Calu3 (cell line): ENCODE measurements at regions of chr13 and their contacts with region 1.

Region 1: GRCh38 chr13:26698392-26699196 is 62.0 kb downstream of the GPR12 start:
- DNase-seq: peak; percentile 81
- H3K4me3 Mint-ChIP-seq: no peak overlapping the region
- H3K27ac Mint-ChIP-seq: no peak overlapping the region
- H3K4me1 Mint-ChIP-seq: peaks cover 8% of the 10 kb centered on the region
- H3K27me3 Mint-ChIP-seq: no peaks in the 10 kb centered on the region
- CTCF ChIP-seq: peak; percentile 54

Region 2: GRCh38 chr13:26186118-26186870 is 512.3 kb before region 1 on chr13:
- CTCF ChIA-PET with region 1: interaction called, 41 read pairs
- intact Hi-C with region 1: loop called (anchors 1 kb)
- DNase-seq: peak; percentile 87
- H3K4me3 Mint-ChIP-seq: peak overlapping the region; percentile 84
- H3K27ac Mint-ChIP-seq: peak overlapping the region; percentile 81
- H3K4me1 Mint-ChIP-seq: no peaks in the 10 kb centered on the region
- H3K27me3 Mint-ChIP-seq: no peaks in the 10 kb centered on the region
- CTCF ChIP-seq: no peak

Region 3: DNA sequence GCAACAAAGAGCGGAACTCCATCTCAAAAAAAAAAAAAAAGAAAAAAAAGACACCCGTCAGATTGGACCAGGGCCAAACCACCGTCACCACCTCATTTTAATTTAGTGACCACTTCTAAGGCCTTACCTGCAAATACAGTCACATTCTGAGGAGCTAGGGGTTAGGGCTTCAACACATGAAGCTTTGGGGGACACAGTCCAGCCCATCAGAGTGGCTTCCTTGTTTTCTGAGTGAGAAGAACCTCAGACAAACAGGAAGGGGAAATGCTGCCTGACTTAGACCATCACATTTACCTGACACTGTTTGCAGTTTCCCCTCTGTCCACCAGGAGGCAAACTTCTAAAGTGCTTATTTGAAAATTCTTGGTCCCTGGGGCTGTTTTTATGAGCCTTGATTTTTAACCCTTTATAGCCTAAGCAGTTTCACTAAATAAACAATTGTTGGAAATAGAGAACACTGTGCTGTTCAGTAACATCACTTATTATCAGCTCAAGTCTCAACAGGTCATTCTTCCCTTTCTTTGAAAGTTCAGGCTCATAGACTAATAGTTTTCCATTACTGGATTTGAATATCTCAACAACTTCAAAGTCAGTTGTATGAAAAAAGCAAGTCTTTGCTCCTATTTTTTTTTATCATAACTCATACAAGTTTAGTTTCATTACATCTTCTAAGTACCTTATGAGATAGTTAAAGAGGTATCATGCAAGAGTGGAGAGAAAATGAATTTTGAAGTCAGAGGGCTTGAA is 216.0 kb before region 1 on chr13:
- CTCF ChIA-PET with region 1: interaction called, 6 read pairs
- intact Hi-C with region 1: loop called (anchors 2 kb)
- DNase-seq: peak; percentile 59
- H3K4me3 Mint-ChIP-seq: no peak overlapping the region
- H3K27ac Mint-ChIP-seq: no peak overlapping the region
- H3K4me1 Mint-ChIP-seq: peaks cover 14% of the 10 kb centered on the region
- H3K27me3 Mint-ChIP-seq: no peaks in the 10 kb centered on the region
- CTCF ChIP-seq: peak; percentile 47

Region 4: GRCh38 chr13:26498656-26499591 is 199.7 kb before region 1 on chr13:
- CTCF ChIA-PET with region 1: interaction called, 7 read pairs
- intact Hi-C with region 1: loop called (anchors 5 kb)
- DNase-seq: peak; percentile 20
- H3K4me3 Mint-ChIP-seq: no peak overlapping the region
- H3K27ac Mint-ChIP-seq: no peak overlapping the region
- H3K4me1 Mint-ChIP-seq: peaks cover 9% of the 10 kb centered on the region
- H3K27me3 Mint-ChIP-seq: peaks cover 12% of the 10 kb centered on the region
- CTCF ChIP-seq: no peak

Region 5: GRCh38 chr13:26628706-26629105 is 69.9 kb before region 1 on chr13:
- CTCF ChIA-PET with region 1: no interaction called
- intact Hi-C with region 1: no loop called
- DNase-seq: peak; percentile 6
- H3K4me3 Mint-ChIP-seq: no peak overlapping the region
- H3K27ac Mint-ChIP-seq: no peak overlapping the region
- H3K4me1 Mint-ChIP-seq: no peaks in the 10 kb centered on the region
- H3K27me3 Mint-ChIP-seq: no peaks in the 10 kb centered on the region
- CTCF ChIP-seq: no peak

Region 6: DNA sequence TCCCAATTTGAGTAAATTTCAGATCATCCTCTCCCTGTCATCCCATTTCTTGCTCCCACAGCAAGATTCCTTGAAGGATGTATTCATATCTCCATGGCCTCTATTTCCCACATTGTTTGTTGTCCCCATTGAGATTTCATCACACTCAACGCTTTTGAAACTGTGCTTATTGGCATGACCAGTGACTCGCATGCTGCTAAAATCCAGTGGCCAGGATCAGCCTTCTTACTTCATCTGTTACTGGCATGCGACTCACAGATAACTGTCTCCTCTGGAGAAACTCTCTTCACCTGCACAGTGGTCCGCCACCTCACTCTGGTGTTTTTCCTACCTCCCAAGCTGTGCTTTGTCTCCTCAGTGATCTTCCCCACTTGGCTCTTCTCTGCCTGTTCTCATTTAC is 45.3 kb before region 1 on chr13:
- CTCF ChIA-PET with region 1: no interaction called
- intact Hi-C with region 1: no loop called
- DNase-seq: no peak
- H3K4me3 Mint-ChIP-seq: no peak overlapping the region
- H3K27ac Mint-ChIP-seq: no peak overlapping the region
- H3K4me1 Mint-ChIP-seq: no peaks in the 10 kb centered on the region
- H3K27me3 Mint-ChIP-seq: no peaks in the 10 kb centered on the region
- CTCF ChIP-seq: no peak

Region 7: GRCh38 chr13:26759907-26760834 is 61.6 kb after region 1 on chr13 and contains the start of gene GPR12:
- CTCF ChIA-PET with region 1: no interaction called
- intact Hi-C with region 1: no loop called
- DNase-seq: no peak
- H3K4me3 Mint-ChIP-seq: peak within 1 kb of the TSS; percentile 55
- H3K27ac Mint-ChIP-seq: no peak within 1 kb of the TSS
- H3K4me1 Mint-ChIP-seq: no peaks in the 10 kb centered on the region
- H3K27me3 Mint-ChIP-seq: peaks cover 74% of the 10 kb centered on the region
- CTCF ChIP-seq: no peak
- total RNA-seq, gene GPR12: not detected in 2 replicates

Region 8: GRCh38 chr13:26996965-26997752 is 298.6 kb after region 1 on chr13:
- CTCF ChIA-PET with region 1: no interaction called
- intact Hi-C with region 1: no loop called
- DNase-seq: no peak
- H3K4me3 Mint-ChIP-seq: no peak overlapping the region
- H3K27ac Mint-ChIP-seq: no peak overlapping the region
- H3K4me1 Mint-ChIP-seq: no peaks in the 10 kb centered on the region
- H3K27me3 Mint-ChIP-seq: peaks cover 30% of the 10 kb centered on the region
- CTCF ChIP-seq: no peak